Psoas muscle (tissue), 8 donors: ENCODE measurements at regions of chr3 and their contacts with region 1.

Region 1: DNA sequence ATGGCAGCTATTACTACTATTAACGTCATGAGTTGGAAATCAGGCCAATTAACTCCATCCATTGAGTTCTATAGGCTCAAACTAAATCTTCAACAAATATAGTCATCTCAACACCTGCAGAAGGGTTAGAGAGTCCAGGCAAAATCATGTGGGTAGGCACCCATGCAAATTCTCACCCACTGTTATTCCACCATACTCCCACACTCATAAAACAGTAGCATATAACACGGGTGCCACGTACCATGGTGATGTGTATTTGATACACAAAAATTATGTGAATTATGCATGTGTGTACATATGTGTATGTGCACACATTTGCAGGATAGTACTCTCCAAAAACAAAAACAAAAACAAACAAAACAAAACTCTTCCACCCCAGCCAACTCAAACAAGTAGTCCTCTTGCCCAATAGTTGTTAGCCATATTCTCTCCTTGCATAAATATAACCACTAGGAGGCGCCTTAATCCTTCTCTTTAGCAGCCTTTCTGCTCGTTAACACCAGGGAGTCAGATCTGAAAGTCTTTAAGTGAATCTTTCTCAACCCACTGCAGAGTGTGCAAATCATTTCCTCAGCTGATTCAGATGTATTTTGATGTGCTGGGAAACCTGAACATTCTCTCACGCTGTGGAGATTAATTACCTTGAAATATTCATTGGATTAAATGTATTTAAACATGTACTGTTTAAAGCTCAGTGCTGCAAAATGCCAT is 38.0 kb upstream of the COPB2 start:
- DNase-seq: no peak
- ATAC-seq: peak; percentile 75 to 96 (median 82)
- H3K4me3 ChIP-seq: no peak overlapping the region
- H3K27ac ChIP-seq: no peak overlapping the region
- H3K4me1 ChIP-seq: no peaks in the 10 kb centered on the region
- H3K27me3 ChIP-seq: no peaks in the 10 kb centered on the region
- CTCF ChIP-seq: peak; percentile 85

Region 2: GRCh38 chr3:139561959-139562676 is 134.7 kb after region 1 on chr3:
- intact Hi-C with region 1: loop called (anchors 2 to 5 kb)
- DNase-seq: no peak
- ATAC-seq: peak in 2 of 4 donors; percentile 71 to 76
- H3K4me3 ChIP-seq: no peak overlapping the region
- H3K27ac ChIP-seq: no peak overlapping the region
- H3K4me1 ChIP-seq: no peaks in the 10 kb centered on the region
- H3K27me3 ChIP-seq: no peaks in the 10 kb centered on the region
- CTCF ChIP-seq: peak; percentile 47

Region 3: GRCh38 chr3:139677388-139678155 is 250.1 kb after region 1 on chr3 and contains the start of gene NMNAT3:
- intact Hi-C with region 1: loop called in 1 of 2 experiments (anchors 10 kb)
- DNase-seq: peak; percentile 84 to 90
- ATAC-seq: peak; percentile 99 to 100 (median 99)
- H3K4me3 ChIP-seq: peak within 1 kb of the TSS; percentile 85
- H3K27ac ChIP-seq: peak within 1 kb of the TSS; percentile 83
- H3K4me1 ChIP-seq: peaks cover 5% of the 10 kb centered on the region
- H3K27me3 ChIP-seq: no peaks in the 10 kb centered on the region
- CTCF ChIP-seq: no peak
- total RNA-seq, gene NMNAT3: 6.0 to 9.8 (median 9.3) TPM